Gastrocnemius medialis (tissue), 4 donors: ENCODE measurements at regions of chr2 and their contacts with region 1.

Region 1: DNA sequence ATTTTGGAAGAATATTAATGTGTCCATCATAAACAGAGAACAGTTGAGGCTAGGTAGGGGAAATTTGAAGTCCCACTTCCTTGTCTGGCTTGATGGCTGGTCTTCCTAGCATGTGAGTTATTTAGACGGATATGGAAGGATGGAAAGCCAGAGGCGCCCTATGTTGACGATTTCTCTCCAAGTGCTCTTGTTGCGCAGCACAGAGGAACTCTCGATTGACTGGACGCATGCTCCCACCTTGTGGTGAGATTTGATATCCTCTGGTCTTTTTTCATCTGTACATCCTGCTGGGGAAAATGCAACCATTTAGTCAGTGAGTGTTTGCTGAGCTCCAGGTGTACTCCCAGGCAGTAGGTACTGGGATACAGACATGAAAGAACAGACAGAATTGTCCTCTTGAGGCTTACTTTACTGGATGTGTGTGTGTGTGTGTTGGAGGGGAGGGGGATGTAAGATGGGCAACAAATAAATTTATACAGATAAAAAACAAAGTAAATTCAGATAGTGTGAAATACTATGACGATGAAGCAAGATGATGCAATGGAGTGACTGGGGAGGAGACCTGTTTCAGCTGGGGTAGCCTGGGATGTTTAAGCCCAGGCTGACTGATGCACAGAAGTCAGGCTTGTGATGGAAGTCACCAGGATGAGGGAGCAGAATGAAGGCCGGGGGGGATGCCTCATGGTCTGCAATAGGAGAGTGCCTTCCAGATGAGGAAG is 137.2 kb downstream of the TRIM43 start:
- DNase-seq: peak; percentile 18 to 51
- ATAC-seq: peak; percentile 65 to 72
- H3K4me3 ChIP-seq: no peak overlapping the region
- H3K27ac ChIP-seq: no peak overlapping the region
- H3K4me1 ChIP-seq: no peaks in the 10 kb centered on the region
- H3K27me3 ChIP-seq: no peaks in the 10 kb centered on the region
- CTCF ChIP-seq: peak in 4 of 5 experiments; percentile 28 to 57 (median 52)
- POLR2A ChIP-seq: no peak

Region 2: DNA sequence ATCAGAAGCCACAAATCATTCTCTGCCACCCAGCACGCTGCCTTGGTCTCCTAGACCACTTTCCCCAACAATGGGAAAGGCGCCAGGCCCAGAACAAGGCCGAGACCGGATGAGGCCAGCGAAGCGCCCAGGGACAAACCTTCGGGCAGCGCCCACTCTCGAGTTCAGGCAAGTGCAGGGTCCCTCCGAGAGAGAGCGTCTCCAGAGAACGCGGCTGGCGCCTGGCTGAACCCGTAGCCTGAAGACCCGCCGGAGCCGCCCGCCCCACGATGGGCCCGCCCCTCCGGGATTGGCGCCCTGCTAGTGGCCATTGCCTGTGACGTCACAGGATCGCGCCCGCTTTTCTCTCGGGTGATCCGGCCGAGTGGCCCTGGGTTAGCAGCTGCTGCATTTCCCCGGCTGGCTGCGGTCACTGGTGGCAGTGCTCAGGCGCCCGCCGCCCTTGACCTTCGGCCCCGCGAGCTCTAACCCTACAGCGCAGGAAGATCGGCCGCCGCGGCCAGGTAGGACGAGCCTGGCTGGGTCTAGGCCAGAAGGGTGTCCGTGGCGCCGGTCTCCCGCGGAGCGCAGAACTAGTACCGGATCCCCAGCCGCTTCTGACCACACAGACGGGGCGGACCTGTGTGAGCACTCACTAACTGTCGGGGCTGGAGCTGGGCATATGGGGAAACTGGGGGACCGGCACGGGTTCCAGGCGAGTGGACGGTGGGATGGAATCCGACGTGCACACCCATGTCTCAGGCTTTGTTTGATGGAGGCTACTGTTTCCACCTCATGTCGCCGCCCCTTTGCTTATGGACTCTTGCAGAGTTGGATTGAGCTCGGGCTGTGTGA is 326.4 kb before region 1 on chr2 and contains the start of gene FAHD2A:
- in situ Hi-C with region 1: no loop called
- intact Hi-C with region 1: loop called (anchors 5 kb)
- DNase-seq: peak; percentile 93 to 94
- ATAC-seq: peak; percentile 95 to 96
- H3K4me3 ChIP-seq: peak within 1 kb of the TSS; percentile 90 to 99 (median 96)
- H3K27ac ChIP-seq: peak within 1 kb of the TSS; percentile 85 to 96 (median 90)
- H3K4me1 ChIP-seq: peaks cover 12 to 18% of the 10 kb centered on the region in 2 donors
- H3K27me3 ChIP-seq: no peaks in the 10 kb centered on the region
- CTCF ChIP-seq: no peak
- POLR2A ChIP-seq: peak; percentile 69 to 74
- total RNA-seq, gene FAHD2A: 18.4 to 28.3 (median 27.0) TPM

Region 3: DNA sequence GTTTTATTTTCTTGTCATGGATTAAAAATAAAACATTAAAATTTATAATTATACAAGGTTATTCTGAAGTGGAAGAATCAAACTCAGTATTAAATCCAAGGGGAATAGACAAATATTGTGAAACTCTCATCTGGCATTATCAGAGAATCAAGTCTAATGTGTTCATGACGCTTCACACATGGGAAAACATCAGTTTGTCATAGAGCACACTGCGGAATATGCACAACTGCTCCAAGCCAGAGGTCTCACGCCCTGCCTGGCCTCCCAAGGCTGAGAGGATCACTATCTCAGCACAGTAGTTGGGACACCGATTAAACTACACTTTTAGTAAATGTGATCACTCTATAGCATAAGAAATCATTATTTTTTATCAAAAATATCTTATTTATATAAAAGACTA is 223.8 kb before region 1 on chr2:
- in situ Hi-C with region 1: no loop called
- intact Hi-C with region 1: no loop called
- DNase-seq: no peak
- ATAC-seq: no peak
- H3K4me3 ChIP-seq: no peak overlapping the region
- H3K27ac ChIP-seq: no peak overlapping the region
- H3K4me1 ChIP-seq: no peaks in the 10 kb centered on the region
- H3K27me3 ChIP-seq: no peaks in the 10 kb centered on the region
- CTCF ChIP-seq: no peak
- POLR2A ChIP-seq: no peak